Heart right ventricle (tissue), 16 donors: ENCODE measurements at regions of chr20 and their contacts with region 1.

Region 1: DNA sequence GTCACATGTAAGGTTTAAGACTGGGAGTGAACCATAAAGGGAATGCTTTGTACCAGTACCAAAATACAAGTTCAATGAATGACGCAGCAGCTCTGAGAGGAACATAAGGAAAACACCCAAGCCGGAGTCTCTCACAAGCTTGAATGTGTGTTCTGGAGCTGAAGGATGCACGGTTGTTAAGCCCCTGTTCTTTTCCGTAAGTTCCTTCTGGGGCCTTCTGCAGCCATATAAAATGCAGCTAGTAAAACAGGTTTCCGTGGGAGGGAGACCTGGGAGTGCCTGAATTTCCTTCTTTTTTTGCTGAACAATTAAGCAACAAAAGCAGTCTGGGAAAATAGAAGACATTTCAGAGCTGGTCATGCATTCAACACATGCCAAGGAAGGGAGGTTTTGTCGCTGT is 73.2 kb upstream of the JAG1 start:
- DNase-seq: peak in 1 of 2 donors; percentile 13
- ATAC-seq: peak; percentile 53 to 89 (median 77)
- H3K4me3 ChIP-seq: peak overlapping the region in 2 of 10 donors; percentile 1 to 6
- H3K27ac ChIP-seq: peak overlapping the region in 9 of 10 donors; percentile 32 to 82 (median 63)
- H3K4me1 ChIP-seq: peaks cover 0 to 47% (median 7%) of the 10 kb centered on the region in 9 donors
- H3K27me3 ChIP-seq: no peaks in the 10 kb centered on the region
- CTCF ChIP-seq: no peak

Region 2: GRCh38 chr20:10857352-10858070 is 110.5 kb after region 1 on chr20:
- intact Hi-C with region 1: loop called in 1 of 10 experiments (anchors 10 kb)
- DNase-seq: peak in 1 of 2 donors; percentile 59
- ATAC-seq: peak; percentile 56 to 89 (median 76)
- H3K4me3 ChIP-seq: no peak overlapping the region
- H3K27ac ChIP-seq: peak overlapping the region in 7 of 10 donors; percentile 36 to 72 (median 52)
- H3K4me1 ChIP-seq: peaks cover 0 to 51% (median 27%) of the 10 kb centered on the region in 9 donors
- H3K27me3 ChIP-seq: no peaks in the 10 kb centered on the region
- CTCF ChIP-seq: no peak